Stomach (tissue), 19 donors: ENCODE measurements at regions of chr1 and their contacts with region 1.

Region 1: DNA sequence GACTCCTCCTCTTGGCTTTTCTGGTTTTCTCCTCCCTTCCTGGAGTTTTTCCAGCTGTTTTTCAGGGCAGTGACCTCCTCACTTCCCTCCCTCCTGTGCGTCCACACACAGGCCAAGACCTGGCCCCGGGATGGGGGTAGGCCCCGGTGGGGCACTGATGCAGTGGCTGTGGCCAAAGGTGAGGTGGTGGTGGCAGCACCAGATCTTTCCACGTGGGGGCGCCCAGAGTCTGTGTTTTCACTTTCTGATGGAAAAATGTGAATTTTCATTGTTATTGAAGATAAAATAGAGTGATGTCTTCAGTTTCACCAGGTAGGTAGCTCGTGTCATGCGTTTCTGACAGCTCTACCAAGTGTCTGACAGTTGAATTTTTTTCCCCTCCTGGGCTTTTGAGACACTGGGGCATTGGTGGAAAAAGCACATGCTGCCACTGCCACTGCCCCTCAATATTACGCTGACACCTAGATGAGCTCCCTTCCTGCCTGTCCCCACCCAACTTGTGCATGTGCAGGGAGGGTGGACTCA is 39.9 kb upstream of the MAGOH start:
- DNase-seq: peak; percentile 67 to 70
- H3K4me3 ChIP-seq: no peak overlapping the region
- H3K27ac ChIP-seq: no peak overlapping the region
- H3K4me1 ChIP-seq: no peaks in the 10 kb centered on the region
- H3K27me3 ChIP-seq: no peaks in the 10 kb centered on the region
- CTCF ChIP-seq: peak in 5 of 7 experiments; percentile 74 to 92 (median 82)
- EP300 ChIP-seq: no peak
- POLR2A ChIP-seq: no peak

Region 2: DNA sequence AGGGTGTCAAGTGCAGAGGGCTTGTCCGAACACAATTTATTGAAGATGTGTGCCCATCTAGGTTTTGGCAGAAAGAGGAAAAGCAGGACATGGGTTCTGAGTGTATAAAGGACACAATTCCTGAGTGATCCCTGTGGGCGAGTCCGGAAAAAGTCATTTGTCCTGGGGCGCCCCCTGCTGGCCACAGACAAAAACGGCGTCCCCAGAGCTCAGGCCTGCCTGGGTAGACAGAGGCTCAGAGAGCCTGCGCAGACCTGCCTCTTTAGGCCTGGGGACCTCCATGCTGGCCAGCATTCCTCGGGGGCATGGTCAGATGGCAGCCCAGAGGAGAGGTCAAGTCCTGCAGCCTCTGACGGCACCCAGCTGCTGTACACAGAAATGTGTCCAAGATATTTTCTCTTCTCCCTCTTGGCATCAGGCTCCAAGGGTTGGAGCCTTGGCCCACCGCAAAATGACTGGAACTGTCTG is 115.1 kb after region 1 on chr1:
- intact Hi-C with region 1: loop called (anchors 5 kb)
- DNase-seq: peak; percentile 81 to 90
- H3K4me3 ChIP-seq: no peak overlapping the region
- H3K27ac ChIP-seq: no peak overlapping the region
- H3K4me1 ChIP-seq: peaks cover 0 to 6% (median 0%) of the 10 kb centered on the region in 4 donors
- H3K27me3 ChIP-seq: peaks cover 0 to 18% (median 0%) of the 10 kb centered on the region in 3 donors
- CTCF ChIP-seq: peak in 5 of 7 experiments; percentile 74 to 98 (median 87)
- EP300 ChIP-seq: no peak
- POLR2A ChIP-seq: no peak